Activated CD8-positive, alpha-beta T cell treated with anti-CD3 and anti-CD28 coated beads, Interleukin-2, amount 10 ng/mL, durations not matched to agents 7 days and 5 days (primary cell): ENCODE measurements at regions of chr14 and their contacts with region 1.

Region 1: GRCh38 chr14:49862089-49862673 is 9.6 kb upstream of the NEMF start:
- DNase-seq: peak; percentile 92
- ATAC-seq: no peak
- H3K4me3 Mint-ChIP-seq: no peak overlapping the region
- H3K27ac Mint-ChIP-seq: no peak overlapping the region
- H3K4me1 Mint-ChIP-seq: peaks cover 26% of the 10 kb centered on the region
- H3K27me3 Mint-ChIP-seq: no peaks in the 10 kb centered on the region

Region 2: GRCh38 chr14:49879683-49880204 is 17.6 kb after region 1 on chr14:
- CTCF ChIA-PET with region 1: interaction called, 31 read pairs
- POLR2A ChIA-PET with region 1: interaction called, 6 read pairs
- DNase-seq: peak; percentile 73
- ATAC-seq: peak; percentile 91
- H3K4me3 Mint-ChIP-seq: no peak overlapping the region
- H3K27ac Mint-ChIP-seq: peak overlapping the region; percentile 43
- H3K4me1 Mint-ChIP-seq: peaks cover 29% of the 10 kb centered on the region
- H3K27me3 Mint-ChIP-seq: peaks cover 2% of the 10 kb centered on the region

Region 3: GRCh38 chr14:49971156-49972130 is 109.3 kb after region 1 on chr14:
- CTCF ChIA-PET with region 1: interaction called, 36 read pairs
- POLR2A ChIA-PET with region 1: interaction called, 59 read pairs
- DNase-seq: peak; percentile 79
- ATAC-seq: peak; percentile 79
- H3K4me3 Mint-ChIP-seq: peak overlapping the region; percentile 70
- H3K27ac Mint-ChIP-seq: peak overlapping the region; percentile 96
- H3K4me1 Mint-ChIP-seq: peaks cover 65% of the 10 kb centered on the region
- H3K27me3 Mint-ChIP-seq: no peaks in the 10 kb centered on the region

Region 4: GRCh38 chr14:50045039-50045711 is 183.0 kb after region 1 on chr14:
- CTCF ChIA-PET with region 1: interaction called, 16 read pairs
- POLR2A ChIA-PET with region 1: interaction called, 14 read pairs
- DNase-seq: peak; percentile 91
- ATAC-seq: peak; percentile 84
- H3K4me3 Mint-ChIP-seq: peak overlapping the region; percentile 13
- H3K27ac Mint-ChIP-seq: peak overlapping the region; percentile 89
- H3K4me1 Mint-ChIP-seq: peaks cover 75% of the 10 kb centered on the region
- H3K27me3 Mint-ChIP-seq: no peaks in the 10 kb centered on the region

Region 5: GRCh38 chr14:50085570-50086320 is 223.6 kb after region 1 on chr14:
- CTCF ChIA-PET with region 1: interaction called, 86 read pairs
- POLR2A ChIA-PET with region 1: interaction called, 60 read pairs
- DNase-seq: peak; percentile 42
- ATAC-seq: no peak
- H3K4me3 Mint-ChIP-seq: peak overlapping the region; percentile 68
- H3K27ac Mint-ChIP-seq: peak overlapping the region; percentile 96
- H3K4me1 Mint-ChIP-seq: peaks cover 95% of the 10 kb centered on the region
- H3K27me3 Mint-ChIP-seq: no peaks in the 10 kb centered on the region

Region 6: GRCh38 chr14:50109342-50109741 is 247.2 kb after region 1 on chr14:
- CTCF ChIA-PET with region 1: interaction called, 181 read pairs
- POLR2A ChIA-PET with region 1: interaction called, 31 read pairs
- DNase-seq: no peak
- ATAC-seq: no peak
- H3K4me3 Mint-ChIP-seq: no peak overlapping the region
- H3K27ac Mint-ChIP-seq: no peak overlapping the region
- H3K4me1 Mint-ChIP-seq: peaks cover 31% of the 10 kb centered on the region
- H3K27me3 Mint-ChIP-seq: no peaks in the 10 kb centered on the region